Transverse colon (tissue), 4 donors: ENCODE measurements at regions of chr12 and their contacts with region 1.

Region 1: GRCh38 chr12:88141770-88142609 is at the starts of genes CEP290 and TMTC3:
- DNase-seq: peak; percentile 96
- H3K4me3 ChIP-seq: peak within 1 kb of the TSS; percentile 65 to 97 (median 70)
- H3K27ac ChIP-seq: peak within 1 kb of the TSS; percentile 81 to 94 (median 86)
- H3K4me1 ChIP-seq: peaks cover 11 to 34% (median 17%) of the 10 kb centered on the region in 4 donors
- H3K27me3 ChIP-seq: no peaks in the 10 kb centered on the region
- CTCF ChIP-seq: no peak
- EP300 ChIP-seq: no peak
- POLR2A ChIP-seq: peak; percentile 71
- total RNA-seq, gene CEP290: 15.1 to 44.9 (median 18.8) TPM
- total RNA-seq, gene TMTC3: 2.2 to 15.9 (median 10.0) TPM

Region 2: DNA sequence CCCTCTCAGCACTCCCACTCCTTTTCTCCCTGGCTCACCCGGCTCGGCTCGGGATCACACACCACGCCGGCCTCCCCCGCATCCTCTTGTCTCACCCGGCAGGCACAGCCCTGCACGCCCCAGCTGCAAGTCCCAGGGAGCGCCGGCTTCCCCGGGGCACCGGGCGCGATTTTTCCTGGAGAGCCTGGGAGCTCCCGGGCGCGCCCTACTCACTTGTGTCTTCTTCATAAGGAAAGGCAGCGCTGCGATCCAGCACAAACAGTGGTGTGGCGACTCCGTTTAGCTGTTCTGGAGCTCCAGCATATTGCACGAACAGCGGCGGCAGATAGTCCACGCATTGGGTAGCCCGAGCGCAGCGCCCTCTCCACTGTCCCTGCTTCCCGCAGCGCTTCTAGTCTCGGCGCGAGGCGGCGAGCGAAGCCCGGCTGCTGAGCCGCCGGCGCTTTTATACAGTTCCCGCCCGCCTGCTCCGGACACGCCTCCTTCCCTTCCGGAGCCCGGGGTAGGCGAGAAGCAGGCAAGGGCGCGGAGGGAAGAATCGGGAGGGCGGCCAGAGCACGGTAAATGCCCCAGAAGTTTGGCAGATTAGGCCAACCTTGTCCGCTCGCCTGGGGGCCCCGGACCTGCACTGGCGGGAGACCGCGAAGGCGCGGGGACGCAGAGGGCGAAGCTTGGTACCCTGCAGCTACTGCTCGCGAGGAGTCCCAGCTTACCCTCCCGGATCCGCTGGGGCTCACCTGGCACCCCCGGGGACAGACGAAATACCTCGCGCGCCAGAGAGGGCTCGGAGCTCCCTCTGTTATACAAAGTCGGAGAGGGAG is 438.3 kb after region 1 on chr12 and contains the start of gene KITLG:
- in situ Hi-C with region 1: no loop called
- intact Hi-C with region 1: loop called (anchors 10 kb)
- DNase-seq: peak; percentile 89
- H3K4me3 ChIP-seq: peak within 1 kb of the TSS; percentile 64 to 70 (median 68)
- H3K27ac ChIP-seq: peak within 1 kb of the TSS; percentile 86 to 92 (median 90)
- H3K4me1 ChIP-seq: peaks cover 0 to 35% (median 24%) of the 10 kb centered on the region in 4 donors
- H3K27me3 ChIP-seq: no peaks in the 10 kb centered on the region
- CTCF ChIP-seq: peak in 4 of 5 experiments; percentile 18 to 42 (median 28)
- EP300 ChIP-seq: no peak
- POLR2A ChIP-seq: peak; percentile 90
- total RNA-seq, gene KITLG: 10.5 to 44.6 (median 29.1) TPM